Activated naive CD4-positive, alpha-beta T cell treated with anti-CD3 and anti-CD28 coated beads, Interleukin-2, amount 10 ng/mL, durations not matched to agents 7 days and 5 days (primary cell): ENCODE measurements at regions of chr1 and their contacts with region 1.

Region 1: DNA sequence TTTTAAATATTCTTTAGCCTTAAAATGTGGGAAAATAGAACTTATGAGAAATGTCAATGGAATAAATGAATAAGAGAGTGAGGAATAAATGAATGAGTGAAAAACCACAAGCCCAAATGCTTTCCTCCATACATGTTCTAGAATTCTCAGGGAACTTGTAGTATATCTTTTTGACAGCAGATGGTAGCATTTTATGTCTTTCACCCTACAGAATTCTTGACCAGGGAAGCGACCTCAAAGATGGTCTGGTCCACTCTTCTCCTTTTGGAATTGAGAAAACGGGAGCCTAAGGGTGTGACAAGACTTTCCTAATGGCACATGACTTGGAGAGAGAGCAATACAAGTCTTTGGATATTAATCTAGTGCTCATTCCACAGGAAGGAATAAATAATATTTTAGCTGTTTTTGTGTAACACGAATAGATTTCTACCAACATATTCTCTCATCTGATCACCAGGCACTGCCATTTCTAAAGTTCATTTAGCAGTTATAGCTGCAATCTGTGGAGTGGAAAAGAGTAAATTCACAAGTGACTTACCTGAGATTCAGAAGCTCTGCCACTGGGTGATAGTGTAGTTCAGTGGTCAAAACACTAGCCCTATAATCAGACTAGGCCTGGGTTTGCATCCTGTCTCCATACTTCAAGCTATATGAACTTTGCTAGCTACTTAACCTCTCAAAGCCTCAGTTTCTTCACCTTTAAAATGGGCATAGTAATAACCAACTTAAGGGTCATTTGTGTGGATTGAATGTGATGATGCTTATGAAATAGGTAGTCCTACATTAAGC is 15.0 kb upstream of the F5 start:
- DNase-seq: no peak
- H3K4me3 Mint-ChIP-seq: no peak overlapping the region
- H3K27ac Mint-ChIP-seq: peak overlapping the region; percentile 73
- H3K4me1 Mint-ChIP-seq: peaks cover 57% of the 10 kb centered on the region
- H3K27me3 Mint-ChIP-seq: no peaks in the 10 kb centered on the region

Region 2: GRCh38 chr1:169586395-169587255 is 14.7 kb before region 1 on chr1 and contains the start of gene F5:
- CTCF ChIA-PET with region 1: interaction called, 42 read pairs
- DNase-seq: peak; percentile 86
- H3K4me3 Mint-ChIP-seq: peak within 1 kb of the TSS; percentile 84
- H3K27ac Mint-ChIP-seq: peak within 1 kb of the TSS; percentile 78
- H3K4me1 Mint-ChIP-seq: peaks cover 72% of the 10 kb centered on the region
- H3K27me3 Mint-ChIP-seq: no peaks in the 10 kb centered on the region

Region 3: GRCh38 chr1:169618367-169618766 is 17.1 kb after region 1 on chr1:
- CTCF ChIA-PET with region 1: interaction called, 14 read pairs
- DNase-seq: no peak
- H3K4me3 Mint-ChIP-seq: no peak overlapping the region
- H3K27ac Mint-ChIP-seq: no peak overlapping the region
- H3K4me1 Mint-ChIP-seq: peaks cover 8% of the 10 kb centered on the region
- H3K27me3 Mint-ChIP-seq: no peaks in the 10 kb centered on the region

Region 4: DNA sequence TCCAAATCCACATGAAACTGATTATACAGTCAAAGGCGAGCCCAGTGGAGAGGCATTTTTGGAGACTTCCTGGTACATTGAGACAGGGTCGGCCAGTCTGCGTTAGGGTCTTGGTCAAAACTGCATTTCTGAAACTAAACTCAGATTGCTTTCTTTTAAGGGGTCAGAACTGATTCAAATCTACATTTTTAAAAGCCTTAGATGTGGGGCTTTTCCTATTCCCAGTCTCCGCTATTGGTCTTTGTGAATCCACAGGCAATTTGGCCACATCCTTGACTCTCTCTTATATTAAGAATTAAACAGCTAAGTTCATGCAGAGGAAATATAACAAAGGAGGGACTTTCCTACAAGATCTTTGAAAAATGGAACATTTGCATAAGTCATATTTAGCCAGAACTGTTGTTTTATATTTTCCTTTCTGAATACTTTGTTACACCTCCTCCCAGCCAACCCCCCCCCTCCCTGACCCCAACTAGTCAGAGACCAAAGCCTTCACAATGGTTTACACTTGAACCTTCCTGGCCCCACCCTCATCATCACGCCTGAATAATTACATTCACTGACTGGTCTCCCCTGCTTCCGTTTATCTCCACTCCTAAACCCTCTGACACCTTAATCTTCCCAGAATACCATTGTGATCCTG is 79.2 kb after region 1 on chr1:
- CTCF ChIA-PET with region 1: interaction called, 15 read pairs
- DNase-seq: no peak
- H3K4me3 Mint-ChIP-seq: no peak overlapping the region
- H3K27ac Mint-ChIP-seq: peak overlapping the region; percentile 35
- H3K4me1 Mint-ChIP-seq: peaks cover 58% of the 10 kb centered on the region
- H3K27me3 Mint-ChIP-seq: no peaks in the 10 kb centered on the region

Region 5: DNA sequence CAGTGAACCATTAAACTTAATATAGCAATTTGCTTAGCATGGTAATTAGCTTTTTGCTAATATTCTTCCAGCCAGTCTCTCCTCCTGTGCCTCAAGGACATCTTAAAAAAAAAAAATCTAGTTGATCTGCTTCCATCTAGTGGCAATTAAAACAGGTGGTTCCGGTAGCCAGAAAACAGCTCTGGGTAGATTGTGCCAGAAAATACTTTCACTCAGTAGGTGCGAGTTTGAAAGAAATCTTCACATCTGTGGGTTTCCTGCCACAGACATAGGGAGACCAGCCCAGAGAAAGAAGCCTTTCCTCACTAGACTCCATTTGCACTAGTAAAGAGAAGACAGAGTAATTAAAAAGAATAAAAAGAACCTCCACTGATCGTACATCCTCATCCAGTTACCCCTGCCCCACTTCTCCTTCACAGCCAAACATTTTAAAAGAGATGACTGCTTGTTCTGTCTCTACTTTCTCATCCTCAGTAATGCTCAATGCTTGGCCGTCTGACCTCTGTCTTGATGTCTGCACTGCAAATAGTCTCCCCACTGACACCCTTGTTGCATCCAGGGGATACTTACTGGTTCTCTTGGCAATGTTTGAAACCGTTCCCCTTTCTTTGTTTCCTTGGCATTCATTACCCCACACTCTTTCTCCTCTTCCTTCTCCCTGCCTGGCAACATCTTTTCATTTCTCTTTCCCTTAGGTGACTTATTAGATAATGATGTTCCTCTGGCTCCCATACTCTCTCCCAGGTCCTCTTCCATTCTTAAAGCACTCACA is 93.2 kb after region 1 on chr1:
- CTCF ChIA-PET with region 1: interaction called, 151 read pairs
- DNase-seq: peak; percentile 66
- H3K4me3 Mint-ChIP-seq: peak overlapping the region; percentile 39
- H3K27ac Mint-ChIP-seq: peak overlapping the region; percentile 95
- H3K4me1 Mint-ChIP-seq: peaks cover 98% of the 10 kb centered on the region
- H3K27me3 Mint-ChIP-seq: no peaks in the 10 kb centered on the region

Region 6: GRCh38 chr1:169711469-169712281 is 110.4 kb after region 1 on chr1 and contains the start of gene SELL:
- CTCF ChIA-PET with region 1: interaction called, 146 read pairs
- DNase-seq: peak; percentile 86
- H3K4me3 Mint-ChIP-seq: peak within 1 kb of the TSS; percentile 88
- H3K27ac Mint-ChIP-seq: peak within 1 kb of the TSS; percentile 91
- H3K4me1 Mint-ChIP-seq: peaks cover 20% of the 10 kb centered on the region
- H3K27me3 Mint-ChIP-seq: peaks cover 11% of the 10 kb centered on the region

Region 7: GRCh38 chr1:169809370-169810095 is 208.2 kb after region 1 on chr1:
- CTCF ChIA-PET with region 1: interaction called, 17 read pairs
- DNase-seq: no peak
- H3K4me3 Mint-ChIP-seq: no peak overlapping the region
- H3K27ac Mint-ChIP-seq: no peak overlapping the region
- H3K4me1 Mint-ChIP-seq: peaks cover 2% of the 10 kb centered on the region
- H3K27me3 Mint-ChIP-seq: no peaks in the 10 kb centered on the region